Right ventricle myocardium superior (tissue), 1 donor: ENCODE measurements at regions of chr14 and their contacts with region 1.

Region 1: GRCh38 chr14:50619556-50620141 is 48.5 kb downstream of the SAV1 start:
- DNase-seq: no peak
- ATAC-seq: peak; percentile 68

Region 2: DNA sequence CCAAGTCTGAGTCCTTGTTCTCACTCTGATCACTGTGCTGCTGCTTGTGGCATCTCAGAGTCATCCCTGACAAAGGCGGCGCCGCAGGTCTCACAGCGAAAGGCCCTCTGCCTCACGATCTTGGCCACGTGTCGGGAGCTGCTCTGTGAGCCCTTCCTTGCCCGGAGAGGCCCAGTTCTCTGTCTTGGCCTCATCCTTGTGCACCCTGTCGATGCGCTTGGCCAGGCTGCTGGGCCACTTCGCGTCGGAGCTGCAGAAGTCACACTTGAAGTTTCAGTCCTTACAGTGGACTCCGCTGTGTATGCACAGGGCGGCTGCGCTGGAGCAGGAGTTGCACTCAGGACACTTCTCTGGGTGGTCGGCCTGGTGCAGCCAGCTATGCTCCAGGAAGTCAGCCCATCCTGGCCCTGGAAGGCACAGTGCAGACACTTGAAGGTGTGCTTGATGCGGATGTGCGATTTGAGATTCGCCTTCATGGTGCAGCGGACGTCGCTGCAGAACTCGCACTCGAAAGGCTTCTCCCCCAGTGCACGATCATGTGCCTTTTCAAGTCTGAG is 84.9 kb after region 1 on chr14:
- intact Hi-C with region 1: loop called (anchors 5 kb)
- DNase-seq: no peak
- ATAC-seq: no peak

Region 3: GRCh38 chr14:50736932-50737419 is 117.3 kb after region 1 on chr14:
- intact Hi-C with region 1: no loop called
- DNase-seq: no peak
- ATAC-seq: no peak